ENCODE measurements at regions of chr15 and their contacts with region 1.

Region 1: GRCh38 chr15:36501063-36501678 is 78.3 kb upstream of the CDIN1 start:
- DNase-seq: peak in 1 of 2 experiments; percentile 27
- H3K4me3 ChIP-seq: no peak overlapping the region
- H3K27ac ChIP-seq: no peak overlapping the region
- H3K4me1 ChIP-seq: no peaks in the 10 kb centered on the region
- H3K27me3 ChIP-seq: no peaks in the 10 kb centered on the region
- CTCF ChIP-seq: peak; percentile 59

Region 2: DNA sequence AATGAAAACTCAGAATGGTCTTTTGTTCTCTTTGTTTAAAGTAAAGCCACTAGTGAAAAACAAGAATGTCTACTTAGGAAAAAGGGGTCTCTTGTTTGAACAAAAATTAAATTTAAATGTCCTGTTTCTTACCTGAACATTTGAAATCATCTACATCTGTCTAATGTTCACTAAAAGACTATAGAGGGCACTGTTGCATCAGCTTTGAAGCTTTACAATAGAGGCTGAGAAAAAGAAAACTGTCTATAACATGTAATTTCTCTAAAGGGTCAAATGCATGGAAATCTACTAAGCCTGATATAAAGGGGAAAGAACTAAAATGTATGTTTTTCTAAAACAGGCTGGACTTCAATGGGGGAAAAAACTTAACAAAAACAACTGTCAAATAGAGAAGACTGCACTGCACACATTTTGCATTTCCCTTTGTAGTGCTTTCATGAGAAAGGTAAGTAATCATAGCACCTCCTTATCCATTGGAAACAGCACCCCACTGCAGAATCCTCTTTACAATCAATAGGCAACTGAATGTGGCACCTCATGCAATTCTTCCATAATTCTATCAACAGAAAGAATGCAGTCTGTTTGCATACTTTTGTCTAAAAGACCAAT is 981.5 kb before region 1 on chr15:
- CTCF ChIA-PET with region 1: no interaction called
- POLR2A ChIA-PET with region 1: no interaction called
- intact Hi-C with region 1: loop called (anchors 10 kb)
- DNase-seq: no peak
- H3K4me3 ChIP-seq: no peak overlapping the region
- H3K27ac ChIP-seq: no peak overlapping the region
- H3K4me1 ChIP-seq: no peaks in the 10 kb centered on the region
- H3K27me3 ChIP-seq: no peaks in the 10 kb centered on the region
- CTCF ChIP-seq: peak; percentile 70

Region 3: GRCh38 chr15:35751413-35752133 is 749.6 kb before region 1 on chr15:
- CTCF ChIA-PET with region 1: no interaction called
- POLR2A ChIA-PET with region 1: no interaction called
- intact Hi-C with region 1: loop called (anchors 10 kb)
- DNase-seq: peak in 1 of 2 experiments; percentile 54
- H3K4me3 ChIP-seq: no peak overlapping the region
- H3K27ac ChIP-seq: no peak overlapping the region
- H3K4me1 ChIP-seq: no peaks in the 10 kb centered on the region
- H3K27me3 ChIP-seq: no peaks in the 10 kb centered on the region
- CTCF ChIP-seq: peak; percentile 71

Region 4: GRCh38 chr15:36883713-36884517 is 382.7 kb after region 1 on chr15:
- CTCF ChIA-PET with region 1: no interaction called
- POLR2A ChIA-PET with region 1: interaction called, 10 read pairs
- intact Hi-C with region 1: loop called (anchors 1 kb)
- DNase-seq: peak in 1 of 2 experiments; percentile 72
- H3K4me3 ChIP-seq: no peak overlapping the region
- H3K27ac ChIP-seq: no peak overlapping the region
- H3K4me1 ChIP-seq: no peaks in the 10 kb centered on the region
- H3K27me3 ChIP-seq: no peaks in the 10 kb centered on the region
- CTCF ChIP-seq: peak; percentile 86

Region 5: GRCh38 chr15:37019479-37020433 is 518.6 kb after region 1 on chr15:
- CTCF ChIA-PET with region 1: no interaction called
- POLR2A ChIA-PET with region 1: no interaction called
- intact Hi-C with region 1: no loop called
- DNase-seq: no peak
- H3K4me3 ChIP-seq: no peak overlapping the region
- H3K27ac ChIP-seq: no peak overlapping the region
- H3K4me1 ChIP-seq: no peaks in the 10 kb centered on the region
- H3K27me3 ChIP-seq: no peaks in the 10 kb centered on the region
- CTCF ChIP-seq: no peak

Region 6: GRCh38 chr15:37880009-37880834 is 1379.1 kb after region 1 on chr15:
- CTCF ChIA-PET with region 1: no interaction called
- POLR2A ChIA-PET with region 1: no interaction called
- intact Hi-C with region 1: loop called (anchors 10 kb)
- DNase-seq: peak in 1 of 2 experiments; percentile 22
- H3K4me3 ChIP-seq: no peak overlapping the region
- H3K27ac ChIP-seq: no peak overlapping the region
- H3K4me1 ChIP-seq: peaks cover 5% of the 10 kb centered on the region; the same call in 1 of the 2 replicates
- H3K27me3 ChIP-seq: no peaks in the 10 kb centered on the region
- CTCF ChIP-seq: peak; percentile 81

Measured in PC-9 (cell line).